ENCODE measurements at regions of chr20 and their contacts with region 1.

Region 1: GRCh38 chr20:2873010-2873746 is at the start of gene PTPRA:
- DNase-seq: peak; percentile 80 to 91 (median 88)
- ATAC-seq: peak; percentile 96
- H3K4me3 ChIP-seq: peak within 1 kb of the TSS; percentile 80
- H3K4me3 Mint-ChIP-seq: peak within 1 kb of the TSS; percentile 84 to 96 (median 94)
- H3K27ac ChIP-seq: peak within 1 kb of the TSS; percentile 71
- H3K27ac Mint-ChIP-seq: peak within 1 kb of the TSS; percentile 83 to 95 (median 90)
- H3K4me1 ChIP-seq: peaks cover 25% of the 10 kb centered on the region in 2 donors
- H3K4me1 Mint-ChIP-seq: peaks cover 31 to 47% (median 42%) of the 10 kb centered on the region in 7 donors
- H3K27me3 ChIP-seq: no peaks in the 10 kb centered on the region
- H3K27me3 Mint-ChIP-seq: no peaks in the 10 kb centered on the region
- total RNA-seq, gene PTPRA: 68.0 to 86.6 (median 81.2) TPM

Region 2: GRCh38 chr20:2523919-2524708 is 349.1 kb before region 1 on chr20:
- CTCF ChIA-PET with region 1: no interaction called
- POLR2A ChIA-PET with region 1: no interaction called
- intact Hi-C with region 1: loop called in 1 of 2 experiments (anchors 10 kb)
- DNase-seq: peak; percentile 82 to 97 (median 91)
- ATAC-seq: peak; percentile 96
- H3K4me3 ChIP-seq: peak overlapping the region; percentile 92
- H3K4me3 Mint-ChIP-seq: peak overlapping the region; percentile 80 to 94 (median 90)
- H3K27ac ChIP-seq: peak overlapping the region; percentile 76
- H3K27ac Mint-ChIP-seq: peak overlapping the region; percentile 62 to 94 (median 86)
- H3K4me1 ChIP-seq: peaks cover 0 to 5% of the 10 kb centered on the region in 2 donors
- H3K4me1 Mint-ChIP-seq: peaks cover 6 to 24% (median 10%) of the 10 kb centered on the region in 7 donors
- H3K27me3 ChIP-seq: no peaks in the 10 kb centered on the region
- H3K27me3 Mint-ChIP-seq: peaks cover 0 to 4% (median 0%) of the 10 kb centered on the region in 5 donors

Region 3: DNA sequence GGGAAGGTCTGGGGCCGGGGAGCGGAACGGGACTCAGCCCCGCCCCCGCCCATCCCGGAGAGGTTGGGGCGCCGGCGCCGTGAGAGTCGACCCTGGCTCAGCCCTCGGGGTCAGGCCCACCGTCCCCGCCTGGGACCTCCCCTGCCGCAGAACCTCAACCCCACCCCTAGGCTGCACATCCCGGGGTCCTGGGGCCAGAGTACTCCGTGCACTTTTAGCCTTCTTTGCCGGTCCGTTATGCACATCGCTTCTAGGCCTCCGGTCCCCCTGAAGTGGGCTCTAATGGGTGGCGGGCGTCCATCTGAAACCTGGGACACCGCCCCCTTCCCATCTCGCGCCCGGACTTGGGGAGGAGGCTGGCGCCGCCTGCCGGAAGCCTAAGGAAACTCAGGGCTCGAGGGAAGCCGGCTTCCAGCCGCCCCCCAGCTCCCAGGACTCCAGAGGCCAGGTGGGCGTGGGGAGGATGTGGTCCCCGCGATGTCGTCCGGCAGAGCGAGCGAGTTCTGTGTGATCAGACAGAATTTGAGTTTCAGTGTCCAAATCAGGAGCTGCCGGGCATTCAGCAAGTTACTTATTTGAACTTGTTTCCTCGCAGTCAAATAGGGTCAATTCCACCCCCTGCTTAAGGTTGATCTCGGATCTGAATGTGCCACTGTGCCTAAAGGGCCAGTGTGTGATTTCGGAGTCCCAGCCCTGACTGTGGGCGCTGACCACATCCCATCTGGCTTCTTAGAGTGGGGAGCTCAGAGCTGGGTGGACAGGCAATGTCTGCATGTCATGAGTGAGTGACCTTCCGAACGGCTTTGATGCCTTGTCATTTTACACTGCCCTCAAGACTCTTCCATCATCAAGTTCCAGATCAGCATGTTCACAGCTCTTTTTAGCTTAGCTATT is 120.4 kb before region 1 on chr20:
- CTCF ChIA-PET with region 1: no interaction called
- POLR2A ChIA-PET with region 1: no interaction called
- intact Hi-C with region 1: loop called in 1 of 2 experiments (anchors 1 kb)
- DNase-seq: peak; percentile 36 to 63 (median 53)
- ATAC-seq: peak; percentile 48
- H3K4me3 ChIP-seq: peak overlapping the region; percentile 64
- H3K4me3 Mint-ChIP-seq: peak overlapping the region; percentile 74 to 90 (median 86)
- H3K27ac ChIP-seq: no peak overlapping the region
- H3K27ac Mint-ChIP-seq: peak overlapping the region in 8 of 9 donors; percentile 17 to 85 (median 56)
- H3K4me1 ChIP-seq: peaks cover 12 to 18% of the 10 kb centered on the region in 2 donors
- H3K4me1 Mint-ChIP-seq: peaks cover 20 to 35% (median 27%) of the 10 kb centered on the region in 7 donors
- H3K27me3 ChIP-seq: no peaks in the 10 kb centered on the region
- H3K27me3 Mint-ChIP-seq: peaks cover 6 to 54% (median 9%) of the 10 kb centered on the region in 5 donors

Region 4: GRCh38 chr20:2840138-2840966 is 32.8 kb before region 1 on chr20 and contains the starts of genes PCED1A and VPS16:
- CTCF ChIA-PET with region 1: interaction called, 3 read pairs
- POLR2A ChIA-PET with region 1: interaction called, 15 read pairs
- intact Hi-C with region 1: loop called (anchors 1 kb)
- DNase-seq: peak; percentile 83 to 94 (median 90)
- ATAC-seq: peak; percentile 97
- H3K4me3 ChIP-seq: peak within 1 kb of the TSS; percentile 72
- H3K4me3 Mint-ChIP-seq: peak within 1 kb of the TSS; percentile 83 to 93 (median 90)
- H3K27ac ChIP-seq: peak within 1 kb of the TSS; percentile 77
- H3K27ac Mint-ChIP-seq: peak within 1 kb of the TSS; percentile 67 to 95 (median 92)
- H3K4me1 ChIP-seq: peaks cover 15 to 21% of the 10 kb centered on the region in 2 donors
- H3K4me1 Mint-ChIP-seq: peaks cover 18 to 48% (median 45%) of the 10 kb centered on the region in 7 donors
- H3K27me3 ChIP-seq: no peaks in the 10 kb centered on the region
- H3K27me3 Mint-ChIP-seq: no peaks in the 10 kb centered on the region
- total RNA-seq, gene PCED1A: 27.8 to 105 (median 72.5) TPM
- total RNA-seq, gene VPS16: 45.5 to 62.4 (median 56.1) TPM

Region 5: DNA sequence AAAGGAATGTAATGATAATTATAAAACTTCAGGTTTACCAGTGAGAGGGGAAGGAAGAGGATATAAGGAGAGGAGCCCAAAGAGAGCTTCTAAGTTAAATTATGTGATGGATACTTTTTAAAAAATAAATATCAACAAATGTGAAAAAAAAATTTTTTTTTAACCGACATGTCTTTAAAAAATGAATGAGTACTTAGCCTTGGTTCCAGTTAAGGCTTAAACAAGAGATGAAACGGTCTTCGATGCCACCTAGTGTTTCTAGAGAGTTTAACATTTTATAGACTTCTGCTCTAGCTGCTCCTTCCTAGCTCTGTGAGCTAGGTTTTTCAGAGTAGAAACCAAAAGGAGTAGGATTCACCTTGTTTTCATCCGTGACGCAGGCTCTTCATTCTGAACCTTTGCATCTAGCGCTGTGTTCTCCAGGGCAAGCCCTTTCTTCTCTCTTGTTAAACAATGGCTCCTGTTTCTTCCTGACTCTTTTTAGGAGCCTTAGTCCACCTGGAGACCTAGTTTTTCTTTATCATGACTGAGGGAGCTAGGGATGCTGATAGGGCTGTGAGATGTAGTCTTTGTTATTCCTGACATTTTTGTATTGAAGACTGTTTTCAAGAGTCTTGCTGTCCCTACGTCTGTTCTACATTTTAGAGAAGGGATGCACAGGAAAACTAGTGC is 127.8 kb after region 1 on chr20:
- CTCF ChIA-PET with region 1: interaction called, 4 read pairs
- POLR2A ChIA-PET with region 1: no interaction called
- intact Hi-C with region 1: loop called (anchors 1 to 5 kb)
- DNase-seq: peak in 7 of 9 donors; percentile 11 to 66 (median 49)
- ATAC-seq: peak; percentile 88
- H3K4me3 ChIP-seq: no peak overlapping the region
- H3K4me3 Mint-ChIP-seq: no peak overlapping the region
- H3K27ac ChIP-seq: no peak overlapping the region
- H3K27ac Mint-ChIP-seq: peak overlapping the region in 1 of 9 donors; percentile 18
- H3K4me1 ChIP-seq: no peaks in the 10 kb centered on the region
- H3K4me1 Mint-ChIP-seq: peaks cover 0 to 2% (median 0%) of the 10 kb centered on the region in 7 donors
- H3K27me3 ChIP-seq: no peaks in the 10 kb centered on the region
- H3K27me3 Mint-ChIP-seq: no peaks in the 10 kb centered on the region

Region 6: GRCh38 chr20:3407771-3408637 is 534.8 kb after region 1 on chr20:
- CTCF ChIA-PET with region 1: no interaction called
- POLR2A ChIA-PET with region 1: no interaction called
- intact Hi-C with region 1: loop called in 1 of 2 experiments (anchors 1 kb)
- DNase-seq: peak; percentile 53 to 74 (median 68)
- ATAC-seq: peak; percentile 80
- H3K4me3 ChIP-seq: peak overlapping the region; percentile 90
- H3K4me3 Mint-ChIP-seq: peak overlapping the region; percentile 94 to 100 (median 97)
- H3K27ac ChIP-seq: peak overlapping the region; percentile 70
- H3K27ac Mint-ChIP-seq: peak overlapping the region; percentile 83 to 97 (median 92)
- H3K4me1 ChIP-seq: no peaks in the 10 kb centered on the region
- H3K4me1 Mint-ChIP-seq: peaks cover 19 to 35% (median 29%) of the 10 kb centered on the region in 7 donors
- H3K27me3 ChIP-seq: no peaks in the 10 kb centered on the region
- H3K27me3 Mint-ChIP-seq: peaks cover 0 to 37% (median 0%) of the 10 kb centered on the region in 5 donors

Measured in naive thymus-derived CD4-positive, alpha-beta T cell (primary cell).